ENCODE measurements at regions of chr22 and their contacts with region 1.

Region 1: GRCh38 chr22:36123673-36124630 is 36.6 kb downstream of the APOL3 start:
- DNase-seq: peak; percentile 55
- H3K4me3 ChIP-seq: no peak overlapping the region
- CTCF ChIP-seq: peak; percentile 99

Region 2: DNA sequence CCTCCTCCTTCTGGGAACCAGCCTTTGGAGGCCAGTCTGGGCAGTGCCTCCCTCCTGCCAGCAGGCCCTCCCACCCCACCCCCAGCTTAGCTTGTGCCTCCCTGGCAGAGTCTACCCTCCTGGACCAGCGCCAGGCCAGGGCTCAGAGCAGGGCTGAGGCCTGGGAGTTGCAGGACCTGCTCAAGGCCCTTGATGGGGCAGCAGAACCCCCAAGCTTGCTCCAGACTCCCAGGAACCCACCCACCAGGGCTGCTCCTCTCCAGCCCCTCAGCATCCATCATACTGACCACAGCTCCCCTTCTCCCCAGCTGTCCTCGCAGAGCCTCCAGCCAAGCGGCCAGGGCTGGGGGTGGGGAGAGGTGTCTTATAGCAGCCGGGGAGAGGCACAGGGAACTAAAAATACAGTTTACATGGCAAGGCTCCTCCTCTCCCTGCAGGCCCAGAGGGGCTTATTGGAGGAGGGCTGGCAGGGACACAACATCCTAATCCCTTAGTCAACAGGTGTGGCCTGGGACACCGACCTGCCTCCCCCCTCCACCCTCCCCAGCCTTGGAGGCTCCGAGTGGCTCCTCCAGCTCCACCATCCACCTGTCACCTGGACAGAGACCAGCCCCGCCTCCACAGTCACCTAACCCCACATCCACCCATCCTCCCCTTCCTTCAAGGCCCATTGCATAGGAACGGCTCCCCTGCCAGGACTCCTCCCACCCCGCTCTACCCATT is 501.6 kb before region 1 on chr22:
- CTCF ChIA-PET with region 1: interaction called, 29 read pairs
- POLR2A ChIA-PET with region 1: no interaction called
- DNase-seq: no peak
- H3K4me3 ChIP-seq: no peak overlapping the region
- CTCF ChIP-seq: no peak

Region 3: GRCh38 chr22:35627264-35628041 is 496.5 kb before region 1 on chr22:
- CTCF ChIA-PET with region 1: interaction called, 29 read pairs
- POLR2A ChIA-PET with region 1: no interaction called
- DNase-seq: peak; percentile 76
- H3K4me3 ChIP-seq: peak overlapping the region; percentile 66
- CTCF ChIP-seq: peak; percentile 69

Region 4: DNA sequence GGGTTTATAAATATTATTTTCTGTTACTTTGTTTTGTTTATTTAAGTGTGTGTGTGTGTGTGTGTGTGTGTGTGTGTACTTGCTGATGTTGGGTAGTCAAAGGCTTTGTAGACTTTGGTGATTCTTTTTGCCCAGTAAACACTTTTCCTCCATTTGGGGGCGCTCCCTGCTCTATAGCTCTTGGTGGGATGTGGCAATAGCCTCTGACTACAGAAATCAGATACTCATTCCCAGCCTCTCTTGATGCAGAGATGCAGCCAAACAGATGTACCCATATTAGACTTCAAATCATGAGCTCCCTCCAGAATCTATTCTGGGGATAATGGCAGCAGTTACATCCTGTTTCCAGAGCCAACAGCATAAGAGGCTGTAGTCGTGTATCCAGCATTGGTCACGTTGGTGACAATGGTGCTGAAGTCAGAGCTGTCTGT is 439.7 kb before region 1 on chr22:
- CTCF ChIA-PET with region 1: no interaction called
- POLR2A ChIA-PET with region 1: no interaction called
- DNase-seq: no peak
- H3K4me3 ChIP-seq: no peak overlapping the region
- CTCF ChIP-seq: no peak

Region 5: DNA sequence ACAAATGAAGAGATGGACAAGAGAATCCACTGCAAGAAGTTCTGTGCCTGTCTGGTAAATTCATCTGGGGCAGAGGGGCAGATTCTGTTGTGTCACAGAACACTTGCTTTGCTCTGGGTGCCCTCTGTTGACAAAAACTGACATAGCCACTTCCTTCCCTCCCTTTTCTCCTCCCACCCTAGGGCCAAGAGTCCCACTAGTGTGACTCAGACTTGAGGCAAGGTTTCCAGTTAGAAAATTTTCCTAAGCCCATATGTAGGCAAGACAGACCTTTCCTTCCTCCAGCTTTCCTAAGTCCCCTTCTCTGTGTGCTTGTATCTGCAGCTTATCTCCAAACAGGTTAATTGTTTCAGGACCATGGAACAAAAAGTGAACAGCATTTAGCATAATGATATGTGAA is 202.2 kb before region 1 on chr22:
- CTCF ChIA-PET with region 1: interaction called, 18 read pairs
- POLR2A ChIA-PET with region 1: no interaction called
- DNase-seq: peak; percentile 60
- H3K4me3 ChIP-seq: no peak overlapping the region
- CTCF ChIP-seq: peak; percentile 55

Region 6: GRCh38 chr22:35930933-35931332 is 193.0 kb before region 1 on chr22:
- CTCF ChIA-PET with region 1: interaction called, 56 read pairs
- POLR2A ChIA-PET with region 1: interaction called, 3 read pairs
- DNase-seq: no peak
- H3K4me3 ChIP-seq: no peak overlapping the region
- CTCF ChIP-seq: peak; percentile 55

Region 7: DNA sequence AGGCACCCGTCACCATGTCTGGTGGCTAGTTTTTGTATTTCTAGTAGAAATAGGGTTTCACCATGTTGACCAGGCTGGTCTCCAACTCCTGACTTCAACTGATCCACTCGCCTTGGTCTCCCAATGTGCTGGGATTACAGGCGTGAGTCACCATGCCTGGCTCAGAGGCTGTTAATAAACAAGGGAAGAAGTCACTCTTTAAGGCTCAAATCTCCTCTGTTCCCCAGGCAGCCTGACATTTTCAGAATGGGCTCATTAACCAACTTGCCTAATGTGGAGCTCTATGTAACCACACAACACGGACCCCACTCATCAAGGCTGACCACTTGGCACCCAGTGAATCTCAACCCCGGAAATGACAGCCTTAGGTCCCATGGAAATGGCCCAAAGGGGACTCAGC is 12.5 kb after region 1 on chr22:
- CTCF ChIA-PET with region 1: interaction called, 17 read pairs
- POLR2A ChIA-PET with region 1: no interaction called
- DNase-seq: no peak
- H3K4me3 ChIP-seq: no peak overlapping the region
- CTCF ChIP-seq: no peak

Region 8: DNA sequence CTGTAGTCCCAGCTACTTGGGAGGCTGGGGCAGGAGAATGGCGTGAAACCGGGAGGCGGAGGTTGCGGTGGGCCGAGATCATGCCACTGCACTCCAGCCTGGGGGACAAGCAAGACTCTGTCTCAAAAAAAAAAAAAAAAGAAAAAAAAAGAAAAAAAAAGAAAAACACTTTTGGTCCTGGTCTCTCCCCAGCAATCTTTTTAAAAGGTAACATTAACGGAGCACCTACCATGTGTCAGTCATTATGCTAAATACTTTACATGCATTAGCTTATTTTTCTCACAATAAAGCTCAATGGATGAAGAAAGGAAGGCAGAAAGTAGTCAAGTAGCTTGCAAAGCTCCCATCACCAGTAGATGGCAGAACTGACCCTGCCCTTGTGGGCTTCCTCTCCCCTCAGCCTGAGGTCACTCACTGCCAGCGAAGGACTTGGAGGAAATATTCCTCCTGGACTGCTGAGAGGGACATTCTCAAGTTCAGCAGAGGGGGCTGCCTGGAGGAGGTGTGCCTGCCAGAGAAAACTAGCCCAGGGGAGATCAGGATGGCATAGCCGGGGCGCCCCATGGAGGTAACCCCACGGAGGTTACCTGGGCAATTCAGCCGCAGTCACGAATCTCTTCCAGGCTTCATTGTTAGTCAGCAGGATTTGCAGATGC is 21.1 kb after region 1 on chr22:
- CTCF ChIA-PET with region 1: interaction called, 16 read pairs
- POLR2A ChIA-PET with region 1: no interaction called
- DNase-seq: no peak
- H3K4me3 ChIP-seq: no peak overlapping the region
- CTCF ChIP-seq: peak; percentile 72

Region 9: DNA sequence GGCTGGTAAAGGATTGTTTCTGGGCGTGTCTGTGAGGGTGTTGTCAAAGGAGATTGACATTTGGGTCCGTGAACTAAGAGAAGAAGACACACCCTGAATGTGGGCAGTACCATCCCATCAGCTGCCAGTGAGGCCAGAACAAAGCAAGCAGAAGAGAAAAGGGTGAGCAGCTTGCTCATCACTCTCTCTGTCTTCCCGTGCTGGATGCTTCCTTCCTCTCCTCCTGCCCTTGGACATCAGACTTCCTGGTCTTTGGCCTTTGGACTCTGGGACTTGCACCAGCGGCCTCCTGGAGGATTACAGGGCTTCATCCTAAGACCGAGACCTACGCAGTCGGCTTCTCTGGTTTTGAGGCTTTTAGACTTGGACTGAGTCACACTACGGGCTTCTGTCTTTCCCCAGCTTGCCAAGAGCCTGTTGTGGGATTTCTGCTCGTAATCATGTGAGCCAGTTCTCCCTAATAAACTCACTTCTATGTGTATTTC is 96.5 kb after region 1 on chr22:
- CTCF ChIA-PET with region 1: no interaction called
- POLR2A ChIA-PET with region 1: no interaction called
- DNase-seq: no peak
- H3K4me3 ChIP-seq: no peak overlapping the region
- CTCF ChIP-seq: no peak